ENCODE measurements at regions of chr11 and their contacts with region 1.

Region 1: DNA sequence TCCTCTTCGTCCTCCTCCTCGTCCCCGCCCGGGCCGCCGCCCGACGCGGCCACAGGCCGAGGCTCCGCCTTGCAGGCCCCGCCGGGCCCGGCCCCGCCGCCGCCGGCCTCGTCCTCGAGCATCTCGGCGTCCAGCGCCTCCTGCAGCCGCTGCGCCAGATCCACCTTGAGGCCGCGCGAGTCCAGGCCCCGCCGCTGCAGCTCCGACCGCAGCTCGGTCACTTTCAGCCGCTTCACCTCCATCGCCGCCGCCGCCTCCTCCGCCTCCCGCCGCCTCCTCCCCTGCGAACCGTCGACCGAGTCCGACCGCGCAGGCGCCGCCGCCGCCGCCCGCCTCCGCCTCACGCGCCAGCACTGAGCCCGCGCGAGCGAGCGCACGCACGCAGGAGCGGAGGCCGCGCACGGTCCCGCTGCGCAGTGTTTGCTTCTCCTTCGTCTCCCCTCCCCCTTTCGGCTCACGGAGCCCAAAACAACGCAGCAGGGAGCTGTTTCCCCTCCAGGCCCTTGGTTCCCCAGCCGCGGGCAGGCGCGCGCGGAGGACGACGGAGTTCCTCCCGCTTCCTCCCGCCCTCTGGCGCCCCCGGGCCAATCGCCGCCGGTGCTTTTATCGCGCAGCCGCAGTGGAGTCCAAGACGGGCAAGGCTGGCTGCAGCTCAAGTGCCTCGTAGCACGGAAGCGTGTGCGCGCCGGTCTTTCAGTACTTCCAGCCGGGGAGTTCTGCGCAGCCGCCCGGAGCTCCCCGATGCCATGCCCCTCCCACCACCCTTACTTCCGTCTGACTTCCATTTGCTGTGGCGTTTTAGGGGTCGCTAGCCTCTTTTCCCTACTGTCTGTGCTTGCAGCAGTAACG is at the start of gene HNRNPUL2:
- DNase-seq: peak; percentile 97
- ATAC-seq: peak; percentile 84
- H3K4me3 Mint-ChIP-seq: peak within 1 kb of the TSS; percentile 98
- H3K27ac Mint-ChIP-seq: peak within 1 kb of the TSS; percentile 98
- H3K4me1 Mint-ChIP-seq: peaks cover 55% of the 10 kb centered on the region
- H3K27me3 Mint-ChIP-seq: no peaks in the 10 kb centered on the region
- CTCF ChIP-seq: no peak
- total RNA-seq, gene HNRNPUL2: 58.2 and 63.9 TPM in 2 replicates

Region 2: DNA sequence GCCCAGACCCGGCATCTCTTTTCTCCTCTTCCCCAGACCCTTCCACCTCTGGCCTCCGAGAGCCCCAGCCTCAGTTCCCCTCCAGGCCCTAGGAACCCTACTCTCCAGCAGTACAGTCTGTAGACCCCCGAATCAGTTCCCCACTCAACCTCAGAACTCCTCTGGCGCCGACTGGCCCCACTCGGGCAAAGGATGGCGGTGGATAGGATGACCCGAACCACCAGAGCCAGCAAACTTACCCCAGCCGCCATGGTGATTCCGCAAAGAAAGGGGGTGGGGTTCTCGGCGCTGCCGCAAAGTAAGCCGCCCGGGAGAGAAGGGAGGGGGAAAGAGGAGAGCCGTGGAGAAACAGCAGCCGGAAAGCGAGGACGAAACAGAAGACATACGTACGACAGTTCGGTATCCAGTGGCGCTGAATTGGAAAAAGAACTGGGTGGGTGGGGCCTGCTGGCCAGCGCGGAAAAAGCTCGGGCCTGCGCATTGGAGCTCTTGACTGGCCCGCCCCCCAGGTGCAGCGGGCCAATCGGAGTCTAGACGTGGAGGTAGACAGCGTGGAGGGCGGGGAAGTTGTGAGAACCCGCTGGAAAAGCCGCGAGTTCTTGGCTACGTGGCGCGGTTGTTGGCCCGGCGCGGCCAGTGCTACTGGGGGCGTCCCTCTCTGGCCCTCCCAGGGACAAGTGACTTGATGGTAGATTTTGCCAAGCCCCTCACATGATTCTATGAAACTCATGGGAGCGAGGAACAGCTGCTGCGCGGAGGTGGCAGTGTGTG is 153.4 kb before region 1 on chr11 and contains the start of gene EEF1G:
- CTCF ChIA-PET with region 1: no interaction called
- POLR2A ChIA-PET with region 1: interaction called, 12 read pairs
- intact Hi-C with region 1: no loop called
- DNase-seq: peak; percentile 92
- ATAC-seq: peak; percentile 94
- H3K4me3 Mint-ChIP-seq: peak within 1 kb of the TSS; percentile 97
- H3K27ac Mint-ChIP-seq: peak within 1 kb of the TSS; percentile 94
- H3K4me1 Mint-ChIP-seq: peaks cover 51% of the 10 kb centered on the region
- H3K27me3 Mint-ChIP-seq: no peaks in the 10 kb centered on the region
- CTCF ChIP-seq: no peak
- total RNA-seq, gene EEF1G: 2,373 and 2,524 TPM in 2 replicates

Region 3: DNA sequence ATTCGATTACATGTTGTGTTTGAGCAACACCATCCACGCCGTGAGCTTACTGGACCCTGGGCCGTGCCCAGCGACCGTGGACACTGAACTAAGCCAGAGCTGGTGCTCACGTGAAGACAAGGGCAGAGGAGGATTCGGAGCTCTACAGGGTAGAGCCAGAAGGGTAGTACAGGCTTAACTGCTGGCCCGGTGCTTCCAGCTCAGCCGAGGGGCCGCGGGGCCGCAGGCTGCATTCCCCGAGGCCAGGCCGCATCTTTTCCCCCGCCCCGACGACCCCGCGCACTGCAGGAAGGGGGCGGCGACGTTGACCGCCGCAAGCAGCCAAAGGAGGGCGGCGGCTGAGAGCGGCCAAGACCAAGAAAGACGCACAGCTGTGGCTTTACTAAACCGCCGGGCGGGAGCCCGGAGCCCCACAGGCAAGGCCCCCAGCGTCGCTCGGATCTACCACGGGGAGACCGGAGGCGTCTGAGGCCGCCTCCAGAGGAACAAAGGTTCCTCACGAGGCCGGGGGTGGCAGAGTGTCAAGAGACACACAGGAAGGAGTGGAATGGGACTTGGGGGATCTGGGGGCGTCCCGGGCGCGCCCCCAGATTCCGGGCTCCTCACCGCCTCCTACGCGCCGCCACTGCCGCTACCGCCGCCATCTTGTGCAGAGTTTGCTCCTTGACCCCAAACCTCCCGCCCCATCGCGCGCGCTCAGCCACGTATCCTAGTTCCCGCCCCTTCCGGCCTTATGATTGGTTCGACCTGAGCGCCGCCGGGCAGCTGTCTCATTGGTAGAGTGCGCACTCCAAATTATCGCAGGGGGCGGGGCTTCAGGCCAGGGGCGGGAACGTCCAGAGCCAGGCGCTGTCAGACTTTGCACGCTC is 80.9 kb before region 1 on chr11 and contains the start of gene GANAB:
- CTCF ChIA-PET with region 1: no interaction called
- POLR2A ChIA-PET with region 1: interaction called, 6 read pairs
- intact Hi-C with region 1: loop called (anchors 1 kb)
- DNase-seq: peak; percentile 89
- ATAC-seq: peak; percentile 99
- H3K4me3 Mint-ChIP-seq: peak within 1 kb of the TSS; percentile 93
- H3K27ac Mint-ChIP-seq: peak within 1 kb of the TSS; percentile 86
- H3K4me1 Mint-ChIP-seq: peaks cover 34% of the 10 kb centered on the region
- H3K27me3 Mint-ChIP-seq: no peaks in the 10 kb centered on the region
- CTCF ChIP-seq: no peak
- total RNA-seq, gene GANAB: 187 and 189 TPM in 2 replicates

Region 4: GRCh38 chr11:62671575-62672389 is 55.4 kb before region 1 on chr11 and contains the starts of genes LBHD1 and UQCC3:
- CTCF ChIA-PET with region 1: no interaction called
- POLR2A ChIA-PET with region 1: interaction called, 47 read pairs
- intact Hi-C with region 1: loop called (anchors 2 kb)
- DNase-seq: peak; percentile 61
- ATAC-seq: peak; percentile 82
- H3K4me3 Mint-ChIP-seq: peak within 1 kb of the TSS; percentile 100
- H3K27ac Mint-ChIP-seq: peak within 1 kb of the TSS; percentile 98
- H3K4me1 Mint-ChIP-seq: peaks cover 62% of the 10 kb centered on the region
- H3K27me3 Mint-ChIP-seq: no peaks in the 10 kb centered on the region
- CTCF ChIP-seq: no peak
- total RNA-seq, gene LBHD1: 19.1 and 24.9 TPM in 2 replicates
- total RNA-seq, gene UQCC3: 8.3 and 9.4 TPM in 2 replicates

Region 5: GRCh38 chr11:62715150-62716135 is 11.7 kb before region 1 on chr11:
- CTCF ChIA-PET with region 1: no interaction called
- POLR2A ChIA-PET with region 1: interaction called, 188 read pairs
- intact Hi-C with region 1: no loop called
- DNase-seq: no peak
- ATAC-seq: no peak
- H3K4me3 Mint-ChIP-seq: no peak overlapping the region
- H3K27ac Mint-ChIP-seq: no peak overlapping the region
- H3K4me1 Mint-ChIP-seq: peaks cover 17% of the 10 kb centered on the region
- H3K27me3 Mint-ChIP-seq: no peaks in the 10 kb centered on the region
- CTCF ChIP-seq: no peak

Region 6: DNA sequence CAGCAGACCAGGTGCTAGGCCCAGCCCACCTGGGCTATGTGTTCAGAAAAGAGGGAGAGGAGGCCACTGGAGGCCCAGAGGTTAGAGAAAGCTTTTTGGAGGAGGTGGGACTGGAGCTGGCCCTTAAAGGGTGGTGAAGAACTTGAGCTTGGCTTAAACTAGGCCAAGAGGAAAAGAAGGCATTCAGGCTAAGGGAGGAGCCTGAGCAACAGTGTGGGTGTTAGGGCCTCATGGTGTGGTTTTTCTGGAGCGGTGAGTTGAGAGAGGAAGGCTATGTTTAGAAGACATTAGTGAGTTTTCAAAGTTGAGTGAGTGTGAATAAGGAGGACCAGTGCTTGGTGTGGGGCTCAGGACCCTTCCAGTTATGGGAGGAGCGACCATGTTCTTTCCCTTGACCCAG is 50.2 kb after region 1 on chr11:
- CTCF ChIA-PET with region 1: no interaction called
- POLR2A ChIA-PET with region 1: interaction called, 65 read pairs
- intact Hi-C with region 1: no loop called
- DNase-seq: no peak
- ATAC-seq: no peak
- H3K4me3 Mint-ChIP-seq: no peak overlapping the region
- H3K27ac Mint-ChIP-seq: no peak overlapping the region
- H3K4me1 Mint-ChIP-seq: peaks cover 3% of the 10 kb centered on the region
- H3K27me3 Mint-ChIP-seq: no peaks in the 10 kb centered on the region
- CTCF ChIP-seq: no peak

Region 7: DNA sequence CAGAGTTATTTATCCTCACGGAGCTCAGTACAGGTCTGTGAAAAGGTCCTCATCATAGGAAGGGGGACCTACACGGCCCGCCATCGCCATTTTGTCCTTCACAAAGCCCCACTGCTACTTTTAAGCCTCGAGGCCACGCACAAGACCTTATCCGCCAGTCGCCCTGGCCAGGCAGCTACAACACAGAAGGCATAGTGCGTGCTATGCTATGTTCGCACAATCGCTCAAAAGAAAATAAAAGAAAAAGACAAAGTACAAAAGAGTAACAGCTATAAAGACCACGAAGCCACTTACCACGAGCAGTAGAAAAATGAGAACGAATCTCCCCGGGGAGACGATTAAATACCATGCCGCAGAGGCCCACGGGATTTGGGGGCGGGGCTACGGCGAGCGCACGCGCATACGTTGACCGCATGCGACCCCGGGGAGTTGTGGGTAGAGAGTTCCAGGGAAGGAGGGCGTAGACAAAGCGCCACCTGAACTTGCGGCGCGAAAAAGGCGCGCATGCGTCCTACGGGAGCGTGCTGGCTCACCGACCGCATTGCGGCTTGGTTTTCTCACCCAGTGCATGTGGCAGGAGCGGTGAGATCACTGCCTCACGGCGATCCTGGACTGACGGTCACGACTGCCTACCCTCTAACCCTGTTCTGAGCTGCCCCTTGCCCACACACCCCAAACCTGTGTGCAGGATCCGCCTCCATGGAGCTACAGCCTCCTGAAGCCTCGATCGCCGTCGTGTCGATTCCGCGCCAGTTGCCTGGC is 128.6 kb after region 1 on chr11:
- CTCF ChIA-PET with region 1: no interaction called
- POLR2A ChIA-PET with region 1: interaction called, 50 read pairs
- intact Hi-C with region 1: no loop called
- DNase-seq: peak; percentile 99
- ATAC-seq: peak; percentile 89
- H3K4me3 Mint-ChIP-seq: peak overlapping the region; percentile 99
- H3K27ac Mint-ChIP-seq: peak overlapping the region; percentile 96
- H3K4me1 Mint-ChIP-seq: peaks cover 61% of the 10 kb centered on the region
- H3K27me3 Mint-ChIP-seq: no peaks in the 10 kb centered on the region
- CTCF ChIP-seq: no peak